ENCODE measurements at regions of chr1 and their contacts with region 1.

Region 1: GRCh38 chr1:28860332-28861073 is 48.5 kb downstream of the OPRD1 start:
- DNase-seq: no peak

Region 2: DNA sequence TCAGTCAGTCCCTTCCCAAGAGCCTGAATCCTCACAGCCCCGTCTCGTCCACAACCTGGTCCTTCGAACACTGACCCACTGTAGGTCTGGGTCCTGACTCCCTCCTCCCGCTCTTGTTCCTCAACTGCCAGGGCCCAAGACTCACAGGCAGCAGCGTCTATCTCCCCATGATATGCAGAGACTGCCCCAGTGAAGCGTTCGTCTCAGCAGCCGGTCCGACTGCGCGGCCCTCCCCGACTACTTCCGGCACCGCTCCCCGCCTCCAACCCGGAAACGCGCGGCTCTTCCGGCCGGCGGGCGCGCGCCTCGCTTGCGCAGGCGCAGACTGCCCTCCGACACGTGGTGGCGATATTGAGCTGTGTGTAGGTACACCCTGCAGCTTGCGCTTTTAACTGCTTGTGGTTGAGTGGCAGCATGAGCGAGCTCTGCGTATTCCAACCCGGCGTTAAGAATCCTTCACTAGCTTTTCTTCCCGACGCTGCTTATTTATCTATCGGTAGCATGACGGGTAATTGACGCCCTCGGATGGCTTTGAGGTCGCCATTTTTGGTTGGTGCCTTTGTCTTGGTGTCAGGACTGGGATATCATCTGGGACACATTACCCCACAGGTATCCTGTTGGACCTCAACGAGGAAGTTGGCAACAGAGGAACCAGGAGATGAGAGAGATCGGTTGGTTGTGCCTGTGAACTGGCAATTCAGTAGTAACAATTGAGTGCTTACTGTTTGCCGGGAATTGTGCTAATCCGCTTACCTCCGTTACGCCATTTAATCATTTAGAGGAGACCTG is 217.5 kb before region 1 on chr1 and contains the start of gene TAF12:
- in situ Hi-C with region 1: loop called (anchors 25 kb)
- DNase-seq: peak; percentile 99

Region 3: GRCh38 chr1:28668191-28668955 is 192.1 kb before region 1 on chr1 and contains the start of gene GMEB1:
- in situ Hi-C with region 1: no loop called
- DNase-seq: peak; percentile 82

Measured in KBM-7 (cell line).